ENCODE measurements at regions of chr10 and their contacts with region 1.

Region 1: DNA sequence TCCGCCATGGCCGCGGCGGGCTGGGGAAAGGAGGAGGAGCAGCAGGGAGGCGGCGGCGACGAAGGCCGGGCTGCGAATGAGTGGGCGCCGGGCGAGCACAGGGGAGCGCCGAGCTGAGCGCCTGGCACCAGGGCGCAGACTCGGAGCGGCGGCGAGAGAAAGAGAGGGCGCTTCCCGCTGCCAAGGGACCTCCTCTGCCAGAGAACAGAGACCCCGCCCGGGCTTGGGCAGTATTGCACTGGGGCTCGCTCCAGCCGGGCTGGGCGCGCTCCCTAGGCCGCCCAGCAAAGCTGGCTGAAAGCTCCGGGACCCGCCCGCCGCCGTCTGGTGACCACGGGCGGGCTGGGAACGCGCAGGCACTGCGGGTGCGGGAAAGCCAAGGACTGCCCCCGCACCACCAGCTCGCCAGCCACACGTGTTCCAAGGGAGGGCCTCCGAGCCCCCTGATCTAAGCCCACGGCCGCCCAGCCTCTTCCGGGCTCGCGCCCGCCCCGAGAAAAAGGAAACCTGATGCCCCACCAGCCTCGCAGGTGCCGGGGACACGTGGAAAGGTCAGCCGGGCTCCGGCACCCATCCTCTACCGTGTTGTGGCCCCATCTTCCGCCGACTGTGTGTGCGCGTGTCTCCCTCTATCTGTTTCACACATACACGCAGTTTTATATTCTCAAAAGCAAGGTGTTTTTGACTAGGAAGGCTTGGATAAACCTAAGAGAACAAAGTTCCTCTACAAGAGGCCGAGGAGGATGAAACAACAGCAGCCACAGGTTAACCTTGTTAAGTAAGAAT is at the start of gene CCDC6:
- DNase-seq: peak; percentile 91
- ATAC-seq: peak; percentile 81
- H3K4me3 Mint-ChIP-seq: peak within 1 kb of the TSS; percentile 95
- H3K27ac Mint-ChIP-seq: peak within 1 kb of the TSS; percentile 95
- H3K4me1 Mint-ChIP-seq: peaks cover 59% of the 10 kb centered on the region
- H3K27me3 Mint-ChIP-seq: no peaks in the 10 kb centered on the region
- CTCF ChIP-seq: no peak
- total RNA-seq, gene CCDC6: 27.9 and 32.2 TPM in 2 replicates

Region 2: DNA sequence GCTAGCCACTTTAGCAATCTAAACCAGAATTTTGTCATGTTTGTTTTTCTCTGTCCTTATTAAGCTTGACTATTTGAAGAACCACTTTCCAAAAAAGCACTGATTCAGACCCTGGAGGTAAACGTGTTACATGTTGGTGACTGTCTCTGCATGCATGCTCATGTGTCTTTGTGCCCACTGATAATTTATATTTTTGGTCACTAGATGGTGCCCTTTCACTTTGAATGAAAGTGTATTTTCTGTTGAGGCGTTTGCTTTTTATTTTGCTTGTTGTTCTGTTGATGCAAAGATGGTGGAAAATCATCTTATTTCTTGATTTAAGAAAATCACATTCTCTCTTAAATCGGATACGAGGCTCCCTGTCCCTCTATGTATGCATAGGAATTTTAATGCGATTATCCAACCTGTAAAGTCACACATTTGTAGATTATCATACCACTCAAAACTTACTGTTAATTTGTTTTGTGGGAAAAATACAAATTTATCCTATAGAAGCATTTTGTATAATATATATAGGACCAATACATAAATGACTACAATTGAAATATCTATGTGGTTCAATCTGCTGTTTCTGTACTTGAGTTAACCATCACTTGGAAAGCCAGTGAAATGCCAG is 1124.6 kb before region 1 on chr10:
- CTCF ChIA-PET with region 1: no interaction called
- POLR2A ChIA-PET with region 1: no interaction called
- intact Hi-C with region 1: loop called (anchors 5 kb)
- DNase-seq: no peak
- ATAC-seq: no peak
- H3K4me3 Mint-ChIP-seq: no peak overlapping the region
- H3K27ac Mint-ChIP-seq: no peak overlapping the region
- H3K4me1 Mint-ChIP-seq: no peaks in the 10 kb centered on the region
- H3K27me3 Mint-ChIP-seq: no peaks in the 10 kb centered on the region
- CTCF ChIP-seq: no peak

Region 3: DNA sequence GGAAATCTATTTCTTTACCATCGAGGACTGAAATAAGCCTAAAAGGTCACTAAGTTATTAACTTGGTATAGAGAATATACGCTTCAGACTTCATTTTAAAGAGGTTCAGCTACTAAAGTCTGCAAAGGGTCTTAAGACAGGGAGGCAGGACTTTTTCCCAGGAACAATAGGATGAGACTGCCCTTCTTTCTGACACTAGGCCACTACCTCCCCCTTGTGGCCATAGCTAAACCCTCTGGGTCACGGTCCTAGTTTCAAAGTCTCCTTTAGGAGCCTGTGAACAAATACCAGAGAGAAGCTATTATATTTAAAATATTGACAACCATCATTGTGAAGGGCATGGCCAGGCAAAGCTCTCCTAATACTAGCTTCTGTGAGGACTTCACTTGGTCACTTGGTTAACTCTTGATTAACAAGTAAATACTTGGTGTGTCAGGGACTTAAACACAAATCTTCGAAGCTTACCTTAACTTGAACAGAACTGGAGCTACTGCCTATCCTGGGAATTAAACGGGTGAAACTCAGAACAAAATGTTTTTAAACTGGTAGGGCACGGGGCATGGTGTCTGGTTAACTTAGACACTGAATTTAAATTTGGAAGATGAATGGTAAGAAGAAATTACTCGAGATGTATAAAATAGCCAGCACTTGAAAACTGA is 75.9 kb before region 1 on chr10:
- CTCF ChIA-PET with region 1: interaction called, 32 read pairs
- POLR2A ChIA-PET with region 1: interaction called, 25 read pairs
- intact Hi-C with region 1: loop called (anchors 1 kb)
- DNase-seq: no peak
- ATAC-seq: peak; percentile 50
- H3K4me3 Mint-ChIP-seq: no peak overlapping the region
- H3K27ac Mint-ChIP-seq: no peak overlapping the region
- H3K4me1 Mint-ChIP-seq: peaks cover 69% of the 10 kb centered on the region
- H3K27me3 Mint-ChIP-seq: no peaks in the 10 kb centered on the region
- CTCF ChIP-seq: peak; percentile 21

Region 4: DNA sequence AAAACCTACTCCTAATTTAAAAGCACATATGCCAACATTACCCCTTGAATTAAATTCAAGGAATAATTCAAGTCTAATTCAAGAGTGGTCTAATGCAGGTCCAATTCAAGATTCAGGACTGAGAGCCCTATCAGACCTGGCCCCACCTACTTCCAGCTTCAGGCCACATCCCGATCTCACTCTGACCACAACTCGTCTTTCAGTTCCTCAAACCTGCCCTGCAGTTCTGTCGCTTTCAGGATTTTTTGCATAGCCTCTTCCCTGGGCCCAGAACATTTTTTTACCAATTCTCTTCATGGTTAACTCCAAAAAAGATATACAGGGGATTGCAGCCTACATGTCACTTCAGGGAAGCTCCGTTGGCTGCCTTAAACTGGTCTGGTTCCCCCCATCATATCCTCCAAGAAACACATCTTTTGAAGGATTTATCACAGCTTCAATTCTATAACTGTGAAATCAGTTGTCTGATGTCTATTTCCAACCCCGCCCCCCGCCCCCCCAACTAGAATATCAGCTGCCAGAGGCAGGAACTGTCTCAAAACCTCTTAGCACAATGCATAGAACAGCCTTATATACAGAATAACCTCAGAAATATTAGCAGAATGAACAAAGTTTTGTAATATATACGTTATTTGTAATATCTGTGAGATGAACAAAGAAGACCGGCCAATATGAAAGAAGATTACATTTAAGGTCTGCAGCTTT is 21.0 kb before region 1 on chr10:
- CTCF ChIA-PET with region 1: interaction called, 7 read pairs
- POLR2A ChIA-PET with region 1: interaction called, 69 read pairs
- intact Hi-C with region 1: loop called (anchors 1 kb)
- DNase-seq: peak; percentile 69
- ATAC-seq: peak; percentile 89
- H3K4me3 Mint-ChIP-seq: peak overlapping the region; percentile 45
- H3K27ac Mint-ChIP-seq: peak overlapping the region; percentile 68
- H3K4me1 Mint-ChIP-seq: peaks cover 87% of the 10 kb centered on the region
- H3K27me3 Mint-ChIP-seq: no peaks in the 10 kb centered on the region
- CTCF ChIP-seq: no peak

Region 5: GRCh38 chr10:60099998-60100747 is 193.6 kb after region 1 on chr10:
- CTCF ChIA-PET with region 1: no interaction called
- POLR2A ChIA-PET with region 1: no interaction called
- intact Hi-C with region 1: loop called (anchors 1 kb)
- DNase-seq: no peak
- ATAC-seq: no peak
- H3K4me3 Mint-ChIP-seq: no peak overlapping the region
- H3K27ac Mint-ChIP-seq: no peak overlapping the region
- H3K4me1 Mint-ChIP-seq: no peaks in the 10 kb centered on the region
- H3K27me3 Mint-ChIP-seq: no peaks in the 10 kb centered on the region
- CTCF ChIP-seq: peak; percentile 70

Region 6: GRCh38 chr10:60733189-60733822 is 826.7 kb after region 1 on chr10:
- CTCF ChIA-PET with region 1: no interaction called
- POLR2A ChIA-PET with region 1: no interaction called
- intact Hi-C with region 1: loop called (anchors 1 kb)
- DNase-seq: peak; percentile 45
- ATAC-seq: peak; percentile 83
- H3K4me3 Mint-ChIP-seq: peak overlapping the region; percentile 93
- H3K27ac Mint-ChIP-seq: no peak overlapping the region
- H3K4me1 Mint-ChIP-seq: peaks cover 36% of the 10 kb centered on the region
- H3K27me3 Mint-ChIP-seq: peaks cover 4% of the 10 kb centered on the region
- CTCF ChIP-seq: no peak